ENCODE measurements at regions of chr17 and their contacts with region 1.

Region 1: GRCh38 chr17:51153210-51154072 is at the start of gene NME1:
- DNase-seq: peak; percentile 99
- H3K4me3 ChIP-seq: peak within 1 kb of the TSS; percentile 69 to 88 (median 71)
- H3K27ac ChIP-seq: peak within 1 kb of the TSS; percentile 83
- H3K4me1 ChIP-seq: peaks cover 14% of the 10 kb centered on the region
- H3K27me3 ChIP-seq: no peaks in the 10 kb centered on the region
- CTCF ChIP-seq: peak; percentile 84 to 92
- total RNA-seq, gene NME1: 47.7 to 180 TPM

Region 2: DNA sequence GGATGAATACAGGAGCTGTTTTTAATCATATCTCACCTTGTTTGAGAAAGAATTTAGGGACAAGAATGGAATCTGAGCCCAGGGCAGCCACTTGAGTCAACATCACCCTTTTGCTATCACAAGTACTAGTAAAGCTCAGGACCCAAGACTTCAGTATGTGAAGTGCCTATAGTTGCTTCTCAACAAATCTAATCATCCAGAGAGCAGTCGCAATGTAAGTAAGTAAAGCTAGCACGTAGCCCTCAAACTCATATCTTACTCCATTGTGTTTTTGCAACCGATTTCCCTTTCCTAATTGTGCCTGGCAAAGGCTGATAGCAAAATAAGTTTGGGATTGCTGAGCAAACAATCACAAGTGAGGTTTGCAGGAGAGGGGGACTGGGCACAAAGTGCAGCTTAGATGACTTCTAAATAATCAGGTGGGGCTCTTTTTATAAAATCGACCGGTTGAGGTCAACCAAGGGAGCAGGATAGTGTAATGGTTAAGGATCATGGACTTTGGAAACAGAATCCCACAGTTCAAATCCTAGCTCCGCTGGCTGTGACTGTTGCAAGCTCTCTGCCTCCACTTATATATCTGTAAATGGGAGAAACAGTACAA is 300.3 kb before region 1 on chr17:
- CTCF ChIA-PET with region 1: no interaction called
- dilution Hi-C with region 1: no loop called
- in situ Hi-C with region 1: loop called in 1 of 2 experiments (anchors 25 kb)
- intact Hi-C with region 1: loop called (anchors 2 kb)
- DNase-seq: no peak
- H3K4me3 ChIP-seq: no peak overlapping the region
- H3K27ac ChIP-seq: no peak overlapping the region
- H3K4me1 ChIP-seq: peaks cover 12% of the 10 kb centered on the region
- H3K27me3 ChIP-seq: no peaks in the 10 kb centered on the region
- CTCF ChIP-seq: no peak

Region 3: DNA sequence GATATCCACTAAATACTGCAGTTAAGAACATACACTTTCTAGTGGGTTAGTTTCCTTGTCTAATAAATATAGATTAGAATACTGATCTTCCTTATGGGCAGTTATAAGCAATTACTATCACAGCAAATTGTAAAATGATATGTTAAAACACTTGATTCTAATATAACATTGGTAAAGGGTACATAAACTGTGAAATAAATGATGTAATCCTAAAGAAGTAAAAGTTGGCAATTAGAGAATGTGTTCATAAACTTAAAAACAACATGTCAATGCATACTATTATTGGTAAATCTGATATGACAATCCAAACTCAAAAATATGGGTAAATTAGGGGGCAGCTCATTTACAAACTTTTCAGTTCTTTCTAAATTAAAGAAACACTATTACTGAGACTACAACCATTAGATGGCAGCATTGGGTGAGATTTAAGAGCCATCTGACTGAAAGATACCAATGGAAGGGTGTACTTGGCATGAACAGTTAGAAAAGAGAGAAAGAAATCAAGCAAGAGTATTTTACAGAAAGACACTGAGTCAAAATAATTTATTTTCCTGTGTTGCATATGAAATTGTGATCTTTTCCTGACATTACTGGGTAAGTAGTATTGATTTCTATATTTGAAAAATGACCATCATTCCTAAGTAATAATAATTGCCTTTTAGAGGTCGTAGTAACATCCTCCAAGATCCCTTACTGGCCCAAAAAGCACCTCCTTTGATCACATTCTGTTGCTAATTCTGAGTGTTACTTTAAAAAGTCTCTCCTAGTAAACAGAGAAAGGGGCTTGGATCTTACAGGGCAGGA is 152.4 kb before region 1 on chr17:
- CTCF ChIA-PET with region 1: interaction called, 4 read pairs
- dilution Hi-C with region 1: no loop called
- in situ Hi-C with region 1: loop called (anchors 10 kb)
- intact Hi-C with region 1: loop called (anchors 1 kb)
- DNase-seq: peak; percentile 44
- H3K4me3 ChIP-seq: no peak overlapping the region
- H3K27ac ChIP-seq: no peak overlapping the region
- H3K4me1 ChIP-seq: no peaks in the 10 kb centered on the region
- H3K27me3 ChIP-seq: no peaks in the 10 kb centered on the region
- CTCF ChIP-seq: peak; percentile 39 to 45

Region 4: GRCh38 chr17:51087072-51087757 is 66.2 kb before region 1 on chr17:
- CTCF ChIA-PET with region 1: no interaction called
- dilution Hi-C with region 1: no loop called
- in situ Hi-C with region 1: no loop called
- intact Hi-C with region 1: loop called (anchors 2 kb)
- DNase-seq: peak; percentile 52
- H3K4me3 ChIP-seq: no peak overlapping the region
- H3K27ac ChIP-seq: no peak overlapping the region
- H3K4me1 ChIP-seq: peaks cover 17% of the 10 kb centered on the region
- H3K27me3 ChIP-seq: no peaks in the 10 kb centered on the region
- CTCF ChIP-seq: no peak

Region 5: GRCh38 chr17:51166197-51166986 is 13.0 kb after region 1 on chr17 and contains the start of gene NME2:
- CTCF ChIA-PET with region 1: no interaction called
- dilution Hi-C with region 1: no loop called
- in situ Hi-C with region 1: no loop called
- intact Hi-C with region 1: loop called (anchors 1 kb)
- DNase-seq: peak; percentile 88
- H3K4me3 ChIP-seq: peak within 1 kb of the TSS; percentile 75 to 99 (median 93)
- H3K27ac ChIP-seq: peak within 1 kb of the TSS; percentile 72
- H3K4me1 ChIP-seq: peaks cover 18% of the 10 kb centered on the region
- H3K27me3 ChIP-seq: no peaks in the 10 kb centered on the region
- CTCF ChIP-seq: no peak
- total RNA-seq, gene NME2: 469 to 832 TPM